PC-9 (cell line): ENCODE measurements at regions of chr2 and their contacts with region 1.

Region 1: GRCh38 chr2:127422810-127423475 is 4.7 kb downstream of the PROC start:
- DNase-seq: peak in 1 of 2 experiments; percentile 43
- H3K4me3 ChIP-seq: peak overlapping the region; percentile 97
- H3K27ac ChIP-seq: no peak overlapping the region
- H3K4me1 ChIP-seq: peaks cover 8% of the 10 kb centered on the region
- H3K27me3 ChIP-seq: no peaks in the 10 kb centered on the region
- CTCF ChIP-seq: no peak

Region 2: DNA sequence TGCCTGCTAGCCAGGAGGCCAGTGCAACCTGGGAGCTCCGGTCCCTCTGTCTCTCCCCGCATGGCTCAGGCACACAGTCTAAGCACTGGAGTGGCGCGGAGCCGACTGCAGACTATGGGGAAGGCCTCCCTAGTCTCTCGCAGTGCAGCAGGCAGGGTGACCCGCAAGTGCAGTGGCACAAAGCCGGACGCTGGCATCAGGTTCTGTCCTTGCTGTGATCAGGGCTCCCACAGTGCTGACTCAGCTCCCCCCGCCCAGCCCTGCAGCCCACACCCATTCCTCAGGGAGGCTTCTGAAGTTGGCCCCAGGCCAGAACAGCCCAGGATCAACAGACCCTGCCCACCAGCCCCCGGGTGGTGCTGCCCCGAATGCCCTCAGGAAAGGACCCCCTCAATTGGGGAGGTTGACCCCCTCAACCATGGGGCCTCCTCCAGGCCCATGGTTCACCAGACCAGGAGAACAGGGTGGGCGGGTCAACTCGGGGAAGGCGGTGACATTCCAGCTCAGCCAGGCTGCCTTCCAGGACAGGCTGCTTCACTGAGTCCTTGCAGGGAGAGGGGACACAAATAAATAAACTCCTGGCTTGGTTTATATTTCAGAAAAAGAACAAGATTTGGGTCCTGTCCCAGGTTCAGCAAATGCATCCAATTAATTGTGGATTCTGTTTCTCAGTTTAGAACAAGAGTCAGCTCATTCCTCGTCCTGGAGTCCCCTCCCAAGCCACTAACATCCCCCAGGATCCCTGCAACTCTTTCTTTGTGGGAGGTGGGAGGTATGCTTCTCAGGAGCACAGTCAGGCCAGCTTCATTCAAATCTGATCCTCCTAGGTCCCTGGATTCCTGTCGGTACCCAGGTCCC is 328.2 kb before region 1 on chr2:
- CTCF ChIA-PET with region 1: no interaction called
- POLR2A ChIA-PET with region 1: interaction called, 36 read pairs
- intact Hi-C with region 1: no loop called
- DNase-seq: peak; percentile 71 to 88
- H3K4me3 ChIP-seq: peak overlapping the region; percentile 5; the same call in 1 of the 2 replicates
- H3K27ac ChIP-seq: peak overlapping the region; percentile 51
- H3K4me1 ChIP-seq: peaks cover 43% of the 10 kb centered on the region
- H3K27me3 ChIP-seq: no peaks in the 10 kb centered on the region
- CTCF ChIP-seq: no peak

Region 3: GRCh38 chr2:127348426-127349000 is 74.4 kb before region 1 on chr2:
- CTCF ChIA-PET with region 1: no interaction called
- POLR2A ChIA-PET with region 1: no interaction called
- intact Hi-C with region 1: loop called (anchors 5 kb)
- DNase-seq: no peak
- H3K4me3 ChIP-seq: no peak overlapping the region
- H3K27ac ChIP-seq: no peak overlapping the region
- H3K4me1 ChIP-seq: no peaks in the 10 kb centered on the region
- H3K27me3 ChIP-seq: no peaks in the 10 kb centered on the region
- CTCF ChIP-seq: no peak

Region 4: DNA sequence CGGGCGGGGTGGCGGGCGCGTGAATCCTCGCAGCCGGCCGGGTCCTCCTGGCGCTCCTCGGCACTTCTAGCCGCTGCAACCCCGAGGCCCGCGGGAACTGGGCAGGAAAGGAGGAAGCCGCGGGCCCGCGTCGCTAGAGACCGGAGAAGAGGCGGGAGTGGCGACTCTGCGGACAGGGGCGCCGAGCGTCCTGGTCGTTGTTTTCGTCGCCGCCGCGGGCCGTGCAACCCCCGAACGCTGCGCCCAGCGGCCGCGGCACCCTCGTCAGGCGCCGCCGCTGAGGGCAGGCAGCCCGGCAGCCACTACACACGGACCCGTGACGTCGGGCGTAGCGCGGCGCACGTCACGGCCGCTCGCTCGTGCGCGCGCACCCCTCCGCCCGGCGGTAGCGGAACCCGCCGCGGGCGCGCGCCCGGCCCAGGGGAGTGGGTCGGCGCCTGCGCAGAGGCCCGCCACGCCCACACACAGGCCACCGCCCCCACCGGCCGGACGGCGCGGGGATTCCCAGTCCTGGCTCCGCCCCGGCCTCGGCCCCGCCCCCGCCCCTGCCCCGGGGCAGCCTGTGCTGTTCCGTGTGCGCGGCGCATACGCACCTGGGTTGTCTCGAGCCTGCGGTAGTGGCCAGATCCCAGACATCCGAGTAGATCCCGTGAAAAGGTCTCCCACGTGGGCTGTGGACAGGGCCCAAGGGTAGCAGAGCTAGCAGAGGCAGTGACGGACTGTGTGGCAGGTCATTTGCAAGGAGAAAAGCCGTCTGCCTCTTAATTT is 35.1 kb before region 1 on chr2 and contains the start of gene MAP3K2:
- CTCF ChIA-PET with region 1: no interaction called
- POLR2A ChIA-PET with region 1: no interaction called
- intact Hi-C with region 1: loop called (anchors 1 kb)
- DNase-seq: peak; percentile 82 to 96
- H3K4me3 ChIP-seq: peak within 1 kb of the TSS; percentile 66
- H3K27ac ChIP-seq: peak within 1 kb of the TSS; percentile 81
- H3K4me1 ChIP-seq: peaks cover 42% of the 10 kb centered on the region
- H3K27me3 ChIP-seq: no peaks in the 10 kb centered on the region
- CTCF ChIP-seq: no peak
- total RNA-seq, gene MAP3K2: 75.9 and 81.2 TPM in 2 replicates

Region 5: GRCh38 chr2:127398239-127398590 is 24.7 kb before region 1 on chr2:
- CTCF ChIA-PET with region 1: no interaction called
- POLR2A ChIA-PET with region 1: interaction called, 12 read pairs
- intact Hi-C with region 1: no loop called
- DNase-seq: peak; percentile 90 to 94
- H3K4me3 ChIP-seq: no peak overlapping the region
- H3K27ac ChIP-seq: no peak overlapping the region
- H3K4me1 ChIP-seq: peaks cover 60% of the 10 kb centered on the region
- H3K27me3 ChIP-seq: no peaks in the 10 kb centered on the region
- CTCF ChIP-seq: no peak